ENCODE measurements at regions of chr11 and their contacts with region 1.

Region 1: GRCh38 chr11:19938169-19938856 is 222.0 kb downstream of the DBX1 start:
- ATAC-seq: peak in 3 of 8 experiments; percentile 62 to 89 (median 64)
- H3K4me3 ChIP-seq: no peak overlapping the region
- H3K27ac ChIP-seq: no peak overlapping the region
- H3K4me1 ChIP-seq: peaks cover 11 to 16% of the 10 kb centered on the region in 2 donors

Region 2: DNA sequence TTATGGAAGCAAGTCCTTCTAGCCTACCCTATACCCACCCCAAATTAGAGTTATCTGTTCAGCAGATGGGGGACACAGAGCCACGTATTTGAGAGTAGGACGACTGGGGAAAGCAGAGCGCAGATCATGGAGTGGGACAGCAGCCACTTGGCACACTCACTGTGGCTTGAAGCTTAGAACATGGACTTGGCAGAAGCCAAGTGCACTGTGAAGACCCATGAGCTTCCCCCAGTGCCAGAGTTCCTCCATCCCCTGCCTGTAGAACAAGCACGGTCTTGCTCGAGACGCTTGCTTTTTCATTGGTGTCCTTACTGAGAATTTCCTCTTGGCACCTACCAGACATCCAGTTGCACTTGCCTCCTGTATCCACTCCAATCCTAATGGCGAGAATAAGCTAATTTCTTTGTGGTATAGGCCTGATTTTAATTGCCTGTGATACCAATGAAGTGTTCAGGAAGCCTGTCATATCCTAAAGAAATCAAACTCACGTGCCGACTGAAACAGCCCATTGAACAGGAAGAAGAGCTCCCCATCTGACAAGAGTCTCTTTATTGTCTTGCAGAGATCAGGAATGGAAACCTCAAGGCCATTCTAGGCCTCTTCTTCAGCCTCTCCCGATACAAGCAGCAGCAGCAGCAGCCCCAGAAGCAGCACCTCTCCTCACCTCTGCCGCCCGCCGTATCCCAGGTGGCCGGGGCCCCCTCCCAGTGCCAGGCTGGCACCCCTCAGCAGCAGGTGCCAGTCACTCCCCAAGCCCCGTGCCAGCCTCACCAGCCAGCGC is 58.8 kb before region 1 on chr11:
- in situ Hi-C with region 1: no loop called
- ATAC-seq: no peak
- H3K4me3 ChIP-seq: no peak overlapping the region
- H3K27ac ChIP-seq: no peak overlapping the region
- H3K4me1 ChIP-seq: no peaks in the 10 kb centered on the region

Region 3: GRCh38 chr11:20127671-20128527 is 189.6 kb after region 1 on chr11:
- in situ Hi-C with region 1: loop called in 3 of 9 experiments (anchors 10 to 25 kb)
- ATAC-seq: peak; percentile 67 to 90 (median 86)
- H3K4me3 ChIP-seq: no peak overlapping the region
- H3K27ac ChIP-seq: no peak overlapping the region
- H3K4me1 ChIP-seq: no peaks in the 10 kb centered on the region

Region 4: DNA sequence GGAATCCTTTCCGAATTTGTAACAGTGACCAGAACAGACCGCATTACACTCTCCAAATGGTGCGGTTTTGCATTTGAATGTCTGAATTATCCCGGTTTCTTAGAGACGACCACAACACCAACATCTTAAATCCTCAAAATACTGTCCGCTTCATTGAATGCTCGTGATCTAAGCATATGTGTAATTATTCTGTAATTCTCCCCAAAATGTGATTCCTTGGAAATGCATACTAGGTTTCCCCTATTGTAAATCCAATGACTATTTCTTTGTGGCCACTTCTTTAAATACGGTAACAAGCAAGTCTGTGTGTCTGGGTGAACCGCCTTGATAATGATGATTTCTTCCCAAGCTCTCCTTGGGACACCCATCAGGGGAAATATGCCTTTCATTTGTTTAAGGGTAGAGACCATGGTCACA is 309.3 kb after region 1 on chr11:
- in situ Hi-C with region 1: no loop called
- ATAC-seq: peak in 3 of 8 experiments; percentile 68 to 79 (median 78)
- H3K4me3 ChIP-seq: no peak overlapping the region
- H3K27ac ChIP-seq: no peak overlapping the region
- H3K4me1 ChIP-seq: peaks cover 9 to 10% of the 10 kb centered on the region in 2 donors